Dorsolateral prefrontal cortex (tissue), 120 donors: ENCODE measurements at regions of chr2 and their contacts with region 1.

Region 1: GRCh38 chr2:164717000-164717803 is 95.9 kb upstream of the GRB14 start:
- DNase-seq: no peak
- H3K4me3 ChIP-seq: no peak overlapping the region
- H3K27ac ChIP-seq: peak overlapping the region in 1 of 59 donors; percentile 6
- H3K27me3 ChIP-seq: no peaks in the 10 kb centered on the region
- CTCF ChIP-seq: peak; percentile 51 to 87 (median 73)

Region 2: DNA sequence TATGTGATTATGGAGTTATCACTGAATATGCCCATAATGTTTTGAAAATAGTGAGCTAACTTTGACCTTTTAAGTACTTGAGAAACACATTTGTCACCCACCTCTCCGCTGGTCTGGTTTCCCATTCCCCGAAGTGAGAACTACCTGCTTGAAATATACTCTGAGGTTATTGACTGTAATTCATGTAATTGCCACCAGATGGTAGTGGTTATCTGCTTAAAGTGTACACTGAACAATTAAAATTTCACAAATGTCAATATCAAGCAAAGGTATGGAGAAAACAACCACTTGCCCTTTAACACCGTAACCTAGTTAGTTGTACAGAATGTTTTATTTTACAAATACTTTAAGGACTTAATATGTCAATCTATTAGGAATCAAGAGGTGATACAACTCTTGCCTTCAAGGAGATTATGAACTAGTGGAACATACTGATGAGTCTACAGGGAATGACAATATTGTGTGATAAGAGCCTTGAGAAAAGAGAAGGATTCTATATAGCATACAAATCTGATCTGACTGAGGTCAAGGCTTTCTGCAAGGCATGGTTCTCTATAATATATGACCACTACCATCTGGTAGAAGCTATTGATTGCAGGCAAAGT is 1561.8 kb before region 1 on chr2:
- intact Hi-C with region 1: loop called in 1 of 2 experiments (anchors 10 kb)
- DNase-seq: no peak
- H3K4me3 ChIP-seq: no peak overlapping the region
- H3K27ac ChIP-seq: no peak overlapping the region
- H3K27me3 ChIP-seq: peaks cover 0 to 8% (median 0%) of the 10 kb centered on the region in 45 donors
- CTCF ChIP-seq: peak; percentile 47 to 81 (median 70)

Region 3: DNA sequence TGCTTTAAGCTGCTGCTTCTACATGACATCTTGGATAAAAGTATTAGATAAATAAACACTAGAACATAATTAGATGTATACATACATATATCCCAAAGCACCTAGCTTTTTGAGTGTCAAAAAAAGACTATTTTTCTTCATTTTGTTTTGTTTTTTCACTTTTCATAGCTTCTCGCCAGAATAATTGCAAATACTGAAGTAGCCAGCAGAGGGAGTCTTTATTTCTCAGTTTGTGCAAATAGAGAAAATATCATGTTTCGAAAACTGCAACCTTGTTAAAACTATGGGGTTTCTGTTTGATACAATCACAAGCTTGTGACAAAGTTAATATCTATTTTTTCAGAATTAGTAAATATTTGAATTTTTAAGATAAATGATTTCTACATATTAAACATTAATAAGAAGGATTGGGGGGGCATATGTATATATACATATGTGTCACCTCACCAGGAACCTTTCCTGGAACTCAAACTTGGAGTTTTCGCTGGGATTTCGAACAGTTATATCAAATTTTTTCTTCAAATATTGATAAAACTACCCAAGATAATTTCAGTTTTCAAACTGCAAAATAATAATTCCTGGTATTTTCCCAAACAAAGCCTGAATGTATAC is 156.9 kb before region 1 on chr2:
- intact Hi-C with region 1: loop called (anchors 5 to 10 kb)
- DNase-seq: no peak
- H3K4me3 ChIP-seq: peak overlapping the region in 1 of 59 donors; percentile 3
- H3K27ac ChIP-seq: no peak overlapping the region
- H3K27me3 ChIP-seq: no peaks in the 10 kb centered on the region
- CTCF ChIP-seq: peak; percentile 59 to 89 (median 78)